Mammary epithelial cell (primary cell): ENCODE measurements at regions of chr2 and their contacts with region 1.

Region 1: DNA sequence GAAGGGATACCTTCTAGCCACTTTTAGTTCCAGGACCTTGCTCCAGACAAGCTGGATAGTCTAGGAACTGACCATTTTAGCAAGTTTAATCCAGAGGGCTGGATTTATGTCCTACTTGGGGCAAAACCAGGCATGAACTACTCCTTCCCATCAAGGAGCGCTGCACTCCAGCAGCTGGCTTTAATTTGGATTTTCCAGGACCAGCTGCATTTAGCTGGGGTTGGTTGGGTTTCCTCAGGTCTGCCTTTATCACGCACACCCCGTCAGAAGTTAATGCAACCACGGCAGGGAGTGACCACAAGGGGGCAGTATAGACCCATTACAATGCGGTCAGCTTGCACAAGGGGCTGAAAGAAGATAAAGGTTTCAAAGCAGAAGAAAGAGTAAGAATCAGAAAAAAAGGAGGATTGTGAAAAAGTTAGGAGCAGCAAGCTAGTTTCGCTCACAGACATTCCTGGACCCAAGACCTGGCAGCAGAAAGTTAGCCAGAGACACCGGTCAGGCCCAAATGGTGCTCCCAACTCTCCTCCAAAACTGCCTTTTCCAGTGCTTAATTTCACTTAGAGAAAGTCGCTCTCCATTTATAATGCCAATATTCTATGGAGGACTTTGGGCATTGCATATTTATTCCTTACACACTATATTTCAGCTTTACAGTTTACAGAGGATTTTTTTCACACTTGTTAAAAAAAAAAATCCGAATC is 40.1 kb downstream of the SLC4A1AP start:
- DNase-seq: peak; percentile 80
- H3K4me3 ChIP-seq: no peak overlapping the region
- H3K27ac ChIP-seq: no peak overlapping the region
- H3K4me1 ChIP-seq: peaks cover 40% of the 10 kb centered on the region
- H3K27me3 ChIP-seq: no peaks in the 10 kb centered on the region
- CTCF ChIP-seq: peak; percentile 91 to 93

Region 2: GRCh38 chr2:27509326-27509725 is 194.5 kb before region 1 on chr2:
- CTCF ChIA-PET with region 1: no interaction called
- dilution Hi-C with region 1: no loop called
- in situ Hi-C with region 1: no loop called
- intact Hi-C with region 1: no loop called
- DNase-seq: no peak
- H3K4me3 ChIP-seq: no peak overlapping the region
- H3K27ac ChIP-seq: no peak overlapping the region
- H3K4me1 ChIP-seq: no peaks in the 10 kb centered on the region
- H3K27me3 ChIP-seq: no peaks in the 10 kb centered on the region
- CTCF ChIP-seq: no peak

Region 3: GRCh38 chr2:27754138-27754588 is 50.4 kb after region 1 on chr2:
- CTCF ChIA-PET with region 1: no interaction called
- dilution Hi-C with region 1: no loop called
- in situ Hi-C with region 1: no loop called
- intact Hi-C with region 1: loop called (anchors 1 kb)
- DNase-seq: peak; percentile 76
- H3K4me3 ChIP-seq: no peak overlapping the region
- H3K27ac ChIP-seq: peak overlapping the region; percentile 91
- H3K4me1 ChIP-seq: peaks cover 21% of the 10 kb centered on the region
- H3K27me3 ChIP-seq: no peaks in the 10 kb centered on the region
- CTCF ChIP-seq: peak; percentile 97 to 99

Region 4: GRCh38 chr2:27890146-27890923 is 186.5 kb after region 1 on chr2 and contains the starts of genes BABAM2 and RBKS:
- CTCF ChIA-PET with region 1: no interaction called
- dilution Hi-C with region 1: no loop called
- in situ Hi-C with region 1: no loop called
- intact Hi-C with region 1: loop called (anchors 2 kb)
- DNase-seq: peak; percentile 84
- H3K4me3 ChIP-seq: peak within 1 kb of the TSS; percentile 60 to 76 (median 74)
- H3K27ac ChIP-seq: peak within 1 kb of the TSS; percentile 90
- H3K4me1 ChIP-seq: peaks cover 21% of the 10 kb centered on the region
- H3K27me3 ChIP-seq: no peaks in the 10 kb centered on the region
- CTCF ChIP-seq: no peak
- total RNA-seq, gene BABAM2: 27.9 to 35.0 TPM
- total RNA-seq, gene RBKS: 1.1 to 3.8 TPM

Region 5: DNA sequence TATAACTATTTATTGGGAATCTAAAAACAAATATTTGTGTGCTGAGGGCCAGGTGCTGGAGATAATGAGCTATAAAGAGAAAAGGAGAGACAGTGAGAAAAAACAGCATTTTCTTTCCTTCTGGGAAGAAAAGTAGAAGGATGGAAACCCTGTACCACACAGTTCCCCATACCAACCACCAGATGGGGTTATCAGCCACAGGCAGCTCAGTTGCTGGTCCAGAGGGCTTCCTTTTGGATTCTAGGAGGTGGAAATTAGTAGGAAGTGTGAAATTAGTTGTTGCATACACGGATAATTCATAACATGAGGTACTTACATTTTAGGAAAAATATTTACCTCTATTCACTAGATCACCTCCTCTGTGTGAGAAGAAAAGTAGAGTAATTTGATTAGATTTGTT is 451.8 kb after region 1 on chr2:
- CTCF ChIA-PET with region 1: no interaction called
- dilution Hi-C with region 1: no loop called
- in situ Hi-C with region 1: no loop called
- intact Hi-C with region 1: loop called (anchors 5 kb)
- DNase-seq: no peak
- H3K4me3 ChIP-seq: no peak overlapping the region
- H3K27ac ChIP-seq: no peak overlapping the region
- H3K4me1 ChIP-seq: peaks cover 16% of the 10 kb centered on the region
- H3K27me3 ChIP-seq: no peaks in the 10 kb centered on the region
- CTCF ChIP-seq: peak; percentile 68 to 88

Region 6: GRCh38 chr2:28406276-28407096 is 702.7 kb after region 1 on chr2:
- CTCF ChIA-PET with region 1: no interaction called
- dilution Hi-C with region 1: loop called (anchors 25 kb)
- in situ Hi-C with region 1: loop called in 1 of 2 experiments (anchors 10 kb)
- intact Hi-C with region 1: no loop called
- DNase-seq: peak; percentile 89
- H3K4me3 ChIP-seq: no peak overlapping the region
- H3K27ac ChIP-seq: peak overlapping the region; percentile 26
- H3K4me1 ChIP-seq: peaks cover 59% of the 10 kb centered on the region
- H3K27me3 ChIP-seq: no peaks in the 10 kb centered on the region
- CTCF ChIP-seq: no peak

Region 7: DNA sequence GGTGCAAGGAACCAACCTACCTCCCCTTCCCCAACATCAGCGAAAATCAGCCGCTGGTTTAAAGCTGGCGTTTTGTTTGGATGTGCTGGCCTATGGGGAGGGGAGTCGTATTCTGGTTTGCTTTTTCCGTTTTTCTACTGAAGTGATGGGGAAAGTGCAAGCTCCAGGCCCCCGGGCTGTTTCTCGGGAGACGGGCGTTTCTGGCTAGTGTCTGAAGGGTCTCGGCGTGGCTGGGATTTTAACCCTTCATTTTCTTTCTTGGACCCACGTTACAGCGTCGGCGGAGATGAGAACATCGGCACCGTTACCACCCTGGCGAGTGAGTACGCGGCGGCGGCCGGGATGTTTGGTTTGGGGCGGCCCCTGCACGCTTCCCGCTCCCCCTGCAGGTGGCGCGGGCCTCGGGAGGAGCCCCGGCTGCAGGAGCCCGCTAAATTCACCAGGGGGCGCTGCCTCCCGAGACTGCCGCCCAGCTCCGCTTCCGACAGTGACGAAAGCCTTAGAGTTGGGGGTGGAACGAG is 862.8 kb after region 1 on chr2:
- CTCF ChIA-PET with region 1: no interaction called
- dilution Hi-C with region 1: no loop called
- in situ Hi-C with region 1: no loop called
- intact Hi-C with region 1: loop called (anchors 1 kb)
- DNase-seq: peak; percentile 70
- H3K4me3 ChIP-seq: peak overlapping the region; percentile 46 to 62 (median 55)
- H3K27ac ChIP-seq: peak overlapping the region; percentile 63
- H3K4me1 ChIP-seq: peaks cover 33% of the 10 kb centered on the region
- H3K27me3 ChIP-seq: no peaks in the 10 kb centered on the region
- CTCF ChIP-seq: peak; percentile 96 to 100